AG04449 (cell line): ENCODE measurements at regions of chr10 and their contacts with region 1.

Region 1: GRCh38 chr10:61140765-61141392 is 196.9 kb upstream of the RHOBTB1 start:
- DNase-seq: no peak
- H3K4me3 ChIP-seq: no peak overlapping the region
- CTCF ChIP-seq: peak; percentile 41

Region 2: DNA sequence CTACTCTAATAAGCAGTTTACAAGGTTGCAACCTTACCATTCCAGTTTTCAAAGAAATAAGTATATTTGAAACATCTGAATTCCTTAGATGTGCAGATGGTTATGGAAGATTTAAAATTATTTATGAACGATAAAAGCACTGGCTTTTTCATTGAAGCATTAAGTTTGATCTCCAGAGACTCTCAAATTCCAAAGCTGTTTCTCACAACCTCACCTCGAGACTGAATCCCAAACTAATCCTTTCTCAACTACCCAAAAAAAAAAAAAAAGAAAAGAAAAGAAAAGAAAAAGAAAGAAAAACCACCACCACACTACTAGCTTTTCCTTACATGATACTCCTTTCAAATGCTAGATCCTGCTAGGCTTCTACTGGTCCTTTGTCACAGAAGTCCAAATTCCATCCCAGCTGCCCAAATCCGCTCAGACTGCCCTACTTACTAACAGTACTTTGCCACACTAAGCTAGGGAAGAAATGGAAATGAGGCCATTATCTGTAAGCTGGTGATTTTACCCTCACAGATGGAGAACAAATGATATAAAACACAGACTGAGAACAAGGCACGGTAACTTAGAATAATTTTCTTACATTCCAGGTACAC is 463.2 kb before region 1 on chr10:
- CTCF ChIA-PET with region 1: no interaction called
- POLR2A ChIA-PET with region 1: no interaction called
- DNase-seq: no peak
- H3K4me3 ChIP-seq: no peak overlapping the region
- CTCF ChIP-seq: no peak

Region 3: GRCh38 chr10:60896033-60896432 is 244.8 kb before region 1 on chr10:
- CTCF ChIA-PET with region 1: no interaction called
- POLR2A ChIA-PET with region 1: no interaction called
- DNase-seq: peak; percentile 51
- H3K4me3 ChIP-seq: no peak overlapping the region
- CTCF ChIP-seq: no peak

Region 4: DNA sequence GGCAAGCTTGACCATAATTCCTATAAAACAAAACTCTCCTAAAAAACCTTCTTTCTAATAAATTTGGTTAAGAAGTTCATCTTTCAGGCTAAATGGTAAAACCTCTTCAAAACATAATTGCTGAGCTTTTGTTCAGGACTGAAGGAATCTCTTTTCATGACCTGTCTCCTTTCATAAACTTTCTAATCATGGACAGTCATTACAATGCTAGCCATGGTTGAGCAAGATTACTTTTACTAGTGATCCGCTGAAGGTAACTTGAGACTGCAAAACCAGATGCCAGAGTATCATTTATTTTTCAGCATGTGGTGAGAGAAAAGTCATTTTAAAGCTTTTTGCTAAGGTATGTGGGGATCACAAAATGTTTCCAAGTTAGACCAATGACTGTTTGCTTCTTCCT is 10.5 kb before region 1 on chr10:
- CTCF ChIA-PET with region 1: interaction called, 48 read pairs
- POLR2A ChIA-PET with region 1: no interaction called
- DNase-seq: no peak
- H3K4me3 ChIP-seq: no peak overlapping the region
- CTCF ChIP-seq: no peak

Region 5: DNA sequence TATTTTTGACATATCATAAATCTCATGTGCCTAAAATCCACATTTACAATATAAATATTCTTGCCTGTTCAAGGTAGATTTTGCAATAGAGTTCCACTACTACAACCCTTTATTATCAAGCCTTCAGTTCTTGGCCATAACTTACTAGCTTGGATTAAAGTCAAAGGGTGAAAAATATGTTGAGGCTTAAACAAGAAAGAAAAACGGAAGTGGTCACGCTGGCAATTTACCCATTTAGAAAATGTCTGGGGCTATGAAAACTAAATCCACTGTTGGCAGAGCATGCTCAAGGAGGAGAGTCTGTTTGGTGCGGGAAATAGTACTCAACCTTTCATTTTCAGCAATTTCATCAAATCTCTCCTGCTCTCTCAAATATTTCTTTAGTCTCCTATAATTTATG is 12.9 kb after region 1 on chr10:
- CTCF ChIA-PET with region 1: interaction called, 29 read pairs
- POLR2A ChIA-PET with region 1: no interaction called
- DNase-seq: no peak
- H3K4me3 ChIP-seq: no peak overlapping the region
- CTCF ChIP-seq: no peak

Region 6: GRCh38 chr10:61159253-61159652 is 18.4 kb after region 1 on chr10:
- CTCF ChIA-PET with region 1: interaction called, 22 read pairs
- POLR2A ChIA-PET with region 1: no interaction called
- DNase-seq: no peak
- H3K4me3 ChIP-seq: no peak overlapping the region
- CTCF ChIP-seq: no peak

Region 7: GRCh38 chr10:61164458-61165160 is 23.7 kb after region 1 on chr10:
- CTCF ChIA-PET with region 1: interaction called, 18 read pairs
- POLR2A ChIA-PET with region 1: no interaction called
- DNase-seq: no peak
- H3K4me3 ChIP-seq: no peak overlapping the region
- CTCF ChIP-seq: no peak

Region 8: GRCh38 chr10:61188691-61189090 is 47.8 kb after region 1 on chr10:
- CTCF ChIA-PET with region 1: interaction called, 13 read pairs
- POLR2A ChIA-PET with region 1: no interaction called
- DNase-seq: no peak
- H3K4me3 ChIP-seq: no peak overlapping the region
- CTCF ChIP-seq: no peak

Region 9: GRCh38 chr10:61465901-61466632 is 325.2 kb after region 1 on chr10:
- CTCF ChIA-PET with region 1: no interaction called
- POLR2A ChIA-PET with region 1: no interaction called
- DNase-seq: no peak
- H3K4me3 ChIP-seq: no peak overlapping the region
- CTCF ChIP-seq: no peak

Region 10: DNA sequence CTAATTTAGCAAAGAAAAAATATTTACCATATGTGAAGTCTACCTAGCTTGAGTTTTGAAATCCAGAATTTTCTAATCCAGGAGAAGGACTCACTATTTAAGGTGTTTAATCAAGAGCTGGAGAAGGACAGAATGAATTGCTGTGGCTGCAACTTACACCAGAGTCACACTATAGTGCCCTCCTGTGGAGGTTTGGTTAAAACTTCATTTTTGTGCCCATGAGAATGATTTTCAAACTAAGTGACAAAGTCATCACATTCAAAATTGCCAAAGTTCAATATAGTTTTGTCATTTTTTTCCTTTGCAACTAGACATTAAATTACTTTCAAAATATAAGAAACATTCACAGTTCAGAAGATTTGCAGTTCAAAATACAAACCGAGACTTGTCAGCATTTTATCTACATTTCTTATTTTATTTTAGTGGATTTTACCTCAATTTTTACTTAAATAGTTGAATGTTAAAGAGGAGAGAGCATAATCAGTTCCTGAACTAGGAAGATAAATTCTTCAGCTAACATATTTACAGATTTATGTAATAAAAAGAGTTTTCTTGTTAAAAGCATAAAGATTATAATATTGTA is 592.6 kb after region 1 on chr10:
- CTCF ChIA-PET with region 1: interaction called, 11 read pairs
- POLR2A ChIA-PET with region 1: no interaction called
- DNase-seq: no peak
- H3K4me3 ChIP-seq: no peak overlapping the region
- CTCF ChIP-seq: peak; percentile 45